ENCODE measurements at regions of chr18 and their contacts with region 1.

Region 1: DNA sequence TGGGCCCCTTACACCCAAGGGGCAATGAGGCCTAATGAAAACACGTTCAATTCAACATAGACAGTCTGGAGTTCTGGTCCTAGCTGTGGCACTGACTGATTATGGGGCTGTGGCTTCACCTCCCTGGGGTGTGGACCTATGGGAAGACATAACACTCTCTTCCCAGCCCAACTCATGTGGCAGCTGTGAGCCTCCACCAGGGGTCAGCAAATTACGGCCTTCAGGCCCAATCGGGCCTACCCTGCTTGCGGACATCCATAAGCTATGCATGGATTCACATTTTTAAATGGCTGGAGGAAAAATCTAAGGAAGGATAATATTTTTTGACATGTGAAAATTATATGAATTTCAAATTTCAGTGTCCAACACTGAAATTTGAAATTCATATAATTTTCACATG is 101.3 kb downstream of the LOXHD1 start:
- DNase-seq: peak in 1 of 4 donors; percentile 7
- ATAC-seq: peak; percentile 25
- H3K4me3 ChIP-seq: no peak overlapping the region
- H3K27ac ChIP-seq: no peak overlapping the region
- H3K4me1 ChIP-seq: no peaks in the 10 kb centered on the region
- H3K27me3 ChIP-seq: no peaks in the 10 kb centered on the region
- CTCF ChIP-seq: peak in 1 of 2 donors; percentile 37

Region 2: GRCh38 chr18:46622999-46623398 is 67.3 kb after region 1 on chr18:
- intact Hi-C with region 1: loop called in 1 of 2 experiments (anchors 5 kb)
- DNase-seq: peak in 1 of 4 donors; percentile 10
- ATAC-seq: peak; percentile 34
- H3K4me3 ChIP-seq: no peak overlapping the region
- H3K27ac ChIP-seq: no peak overlapping the region
- H3K4me1 ChIP-seq: peaks cover 0 to 9% of the 10 kb centered on the region in 2 donors
- H3K27me3 ChIP-seq: peaks cover 0 to 4% of the 10 kb centered on the region in 2 donors
- CTCF ChIP-seq: no peak

Region 3: GRCh38 chr18:46660955-46661749 is 105.4 kb after region 1 on chr18:
- intact Hi-C with region 1: no loop called
- DNase-seq: no peak
- ATAC-seq: no peak
- H3K4me3 ChIP-seq: no peak overlapping the region
- H3K27ac ChIP-seq: no peak overlapping the region
- H3K4me1 ChIP-seq: no peaks in the 10 kb centered on the region
- H3K27me3 ChIP-seq: no peaks in the 10 kb centered on the region
- CTCF ChIP-seq: no peak

Region 4: DNA sequence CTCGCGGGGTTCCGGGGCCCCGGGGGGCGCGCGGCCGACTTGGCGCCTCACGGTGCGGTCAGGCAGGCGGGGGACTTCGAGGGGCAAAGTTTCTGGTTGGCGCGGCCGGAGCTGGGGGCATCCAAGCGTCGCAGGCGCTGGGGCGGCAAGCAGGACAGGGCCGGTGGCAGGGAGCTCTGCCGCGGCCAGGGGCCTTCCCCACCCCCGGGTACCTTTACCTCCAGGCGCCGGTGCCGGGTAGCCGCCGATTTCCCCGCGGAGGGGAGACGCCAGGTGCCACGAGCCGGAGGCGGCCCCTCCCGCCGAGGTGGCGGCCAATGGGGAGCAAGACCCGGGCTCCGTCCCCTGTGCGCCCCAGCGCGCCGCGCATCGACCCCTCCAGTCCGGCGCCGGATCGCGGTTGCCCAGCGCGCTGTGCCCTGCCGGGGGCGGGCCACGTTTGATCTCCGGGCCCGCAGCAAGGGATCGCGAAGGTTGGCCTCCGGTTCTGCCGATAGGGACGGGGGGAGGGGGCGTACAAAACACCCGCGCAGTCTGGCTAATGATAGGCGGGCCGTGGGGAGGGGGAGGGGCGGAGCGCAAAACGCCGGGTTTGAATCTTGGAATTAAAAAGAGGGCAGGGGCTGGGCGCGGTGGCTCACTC is 201.0 kb after region 1 on chr18 and contains the start of gene ST8SIA5:
- intact Hi-C with region 1: no loop called
- DNase-seq: peak in 1 of 4 donors; percentile 76
- ATAC-seq: no peak
- H3K4me3 ChIP-seq: peak within 1 kb of the TSS in 1 of 2 donors; percentile 16
- H3K27ac ChIP-seq: no peak within 1 kb of the TSS
- H3K4me1 ChIP-seq: peaks cover 13 to 23% of the 10 kb centered on the region in 2 donors
- H3K27me3 ChIP-seq: peaks cover 50 to 78% of the 10 kb centered on the region in 2 donors
- CTCF ChIP-seq: no peak
- polyA plus RNA-seq, gene ST8SIA5: 0.09 to 0.43 (median 0.27) TPM